ENCODE measurements at regions of chr9 and their contacts with region 1.

Region 1: DNA sequence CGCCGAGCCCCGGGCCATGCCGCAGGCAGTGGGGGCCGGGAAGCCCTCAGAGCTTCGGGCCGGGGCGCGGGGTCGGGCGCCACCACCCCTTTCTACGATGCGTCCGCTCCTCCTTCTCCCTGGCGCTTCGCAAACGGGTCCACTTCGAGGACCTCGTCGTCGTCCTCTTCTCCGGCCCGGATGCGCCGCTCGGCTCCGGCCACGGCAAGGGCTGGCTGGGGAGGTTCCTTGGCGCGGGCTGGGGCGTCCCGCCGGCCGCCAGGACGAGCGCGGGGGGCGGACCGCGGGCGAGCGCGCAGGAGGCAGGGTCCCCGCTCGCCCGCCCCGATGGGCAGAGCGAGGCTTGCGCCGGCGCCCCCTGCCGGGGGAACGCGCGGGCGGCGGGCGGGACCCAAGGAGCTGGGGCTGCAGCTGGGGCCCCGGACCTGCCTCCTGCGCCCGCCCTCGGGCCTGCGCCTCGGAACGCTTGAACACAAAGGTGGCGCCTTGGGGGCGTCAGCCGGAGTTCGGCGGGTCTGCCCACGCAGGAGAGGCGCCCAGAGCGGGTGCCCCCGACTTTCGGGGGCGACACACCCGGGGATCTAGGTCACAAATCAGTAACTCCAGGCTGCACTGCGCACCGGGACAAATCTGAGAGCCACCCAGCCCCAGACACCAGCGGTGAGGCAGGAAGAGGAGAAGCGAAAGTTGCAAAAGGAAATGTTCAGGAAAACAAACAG is at the start of gene ROR2:
- DNase-seq: peak in 1 of 2 experiments; percentile 94
- H3K4me3 ChIP-seq: peak within 1 kb of the TSS; percentile 48 to 78 (median 72)
- H3K27ac ChIP-seq: no peak within 1 kb of the TSS
- H3K4me1 ChIP-seq: peaks cover 2 to 9% (median 2%) of the 10 kb centered on the region in 4 experiments
- H3K27me3 ChIP-seq: peaks cover 7 to 66% (median 51%) of the 10 kb centered on the region in 4 experiments
- CTCF ChIP-seq: peak; percentile 67 to 84 (median 68)
- EP300 ChIP-seq: no peak
- POLR2A ChIP-seq: no peak
- RAD21 ChIP-seq: peak; percentile 33 to 77
- total RNA-seq, gene ROR2: 4.0 and 4.3 TPM in 2 replicates

Region 2: GRCh38 chr9:91546574-91546973 is 403.5 kb before region 1 on chr9:
- CTCF ChIA-PET with region 1: no interaction called
- POLR2A ChIA-PET with region 1: no interaction called
- DNase-seq: no peak
- H3K4me3 ChIP-seq: no peak overlapping the region
- H3K27ac ChIP-seq: no peak overlapping the region
- H3K4me1 ChIP-seq: no peaks in the 10 kb centered on the region
- H3K27me3 ChIP-seq: no peaks in the 10 kb centered on the region
- CTCF ChIP-seq: no peak
- EP300 ChIP-seq: no peak
- POLR2A ChIP-seq: no peak
- RAD21 ChIP-seq: no peak

Region 3: DNA sequence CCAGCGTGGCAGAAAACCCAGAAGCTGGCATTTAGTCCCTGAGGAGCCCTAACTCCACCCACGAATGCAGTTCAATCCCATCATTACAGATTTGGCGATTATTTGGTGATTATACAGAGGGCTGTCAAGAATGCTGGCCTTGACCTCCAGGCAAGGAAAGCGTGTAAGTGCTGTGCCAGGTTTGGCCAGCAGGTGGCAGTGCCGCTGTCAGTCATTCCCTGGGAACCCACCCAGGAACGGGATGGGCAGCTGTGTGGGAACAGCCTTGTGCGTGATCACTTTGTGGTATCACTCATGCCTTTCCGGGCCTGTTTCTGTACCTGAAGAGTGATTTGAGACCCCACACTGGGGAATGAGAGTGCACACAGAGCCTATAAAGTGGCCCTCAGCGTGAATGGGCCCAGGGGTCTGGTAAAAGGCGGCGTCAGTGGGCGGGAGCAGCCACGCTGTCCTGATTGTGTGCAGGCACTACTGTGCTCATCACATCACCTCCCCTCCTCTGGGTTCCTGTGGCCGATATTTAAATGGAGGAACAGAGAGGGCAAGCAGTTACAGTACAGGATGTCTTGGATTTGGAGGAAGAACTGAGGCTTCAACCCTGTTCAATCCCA is 215.6 kb before region 1 on chr9:
- CTCF ChIA-PET with region 1: interaction called, 10 read pairs
- POLR2A ChIA-PET with region 1: no interaction called
- DNase-seq: peak; percentile 23 to 96
- H3K4me3 ChIP-seq: no peak overlapping the region
- H3K27ac ChIP-seq: no peak overlapping the region
- H3K4me1 ChIP-seq: no peaks in the 10 kb centered on the region; a peak in 1 of 7 replicates
- H3K27me3 ChIP-seq: no peaks in the 10 kb centered on the region
- CTCF ChIP-seq: peak; percentile 81 to 99 (median 99)
- EP300 ChIP-seq: no peak
- POLR2A ChIP-seq: no peak
- RAD21 ChIP-seq: peak; percentile 65 to 73

Region 4: GRCh38 chr9:91884696-91885687 is 65.1 kb before region 1 on chr9:
- CTCF ChIA-PET with region 1: interaction called, 13 read pairs
- POLR2A ChIA-PET with region 1: interaction called, 3 read pairs
- DNase-seq: peak in 1 of 2 experiments; percentile 56
- H3K4me3 ChIP-seq: peak overlapping the region in 1 of 4 experiments; percentile 11; a peak in 3 of 8 replicates
- H3K27ac ChIP-seq: no peak overlapping the region
- H3K4me1 ChIP-seq: peaks cover 4 to 20% (median 13%) of the 10 kb centered on the region in 4 experiments
- H3K27me3 ChIP-seq: peaks cover 26 to 45% (median 34%) of the 10 kb centered on the region in 4 experiments
- CTCF ChIP-seq: no peak
- EP300 ChIP-seq: no peak
- POLR2A ChIP-seq: no peak
- RAD21 ChIP-seq: no peak

Region 5: GRCh38 chr9:91966503-91966902 is 16.4 kb after region 1 on chr9:
- CTCF ChIA-PET with region 1: interaction called, 32 read pairs
- POLR2A ChIA-PET with region 1: no interaction called
- DNase-seq: no peak
- H3K4me3 ChIP-seq: no peak overlapping the region
- H3K27ac ChIP-seq: no peak overlapping the region
- H3K4me1 ChIP-seq: no peaks in the 10 kb centered on the region
- H3K27me3 ChIP-seq: no peaks in the 10 kb centered on the region
- CTCF ChIP-seq: no peak
- EP300 ChIP-seq: no peak
- POLR2A ChIP-seq: no peak
- RAD21 ChIP-seq: no peak

Region 6: DNA sequence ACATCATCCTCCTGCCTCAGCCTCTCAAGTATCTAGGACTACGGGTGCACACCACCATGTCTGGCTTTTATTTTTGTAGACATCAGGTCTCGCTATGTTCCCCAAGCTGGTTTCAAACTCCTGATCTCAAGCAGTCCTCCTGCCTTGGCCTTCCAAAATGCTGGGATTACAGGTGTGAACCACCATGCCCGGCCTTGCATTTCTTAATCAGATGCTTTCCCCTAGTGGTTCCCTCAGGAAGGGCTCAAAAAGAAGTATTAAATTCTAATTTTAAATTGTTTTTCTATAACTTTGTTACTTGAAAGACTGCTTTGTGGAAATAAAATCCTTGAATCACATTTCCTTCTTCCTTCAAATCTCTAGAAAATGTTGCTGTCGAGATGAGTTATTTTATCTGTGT is 79.4 kb after region 1 on chr9:
- CTCF ChIA-PET with region 1: interaction called, 11 read pairs
- POLR2A ChIA-PET with region 1: no interaction called
- DNase-seq: no peak
- H3K4me3 ChIP-seq: no peak overlapping the region
- H3K27ac ChIP-seq: no peak overlapping the region
- H3K4me1 ChIP-seq: peaks cover 0 to 3% (median 0%) of the 10 kb centered on the region in 4 experiments; a peak in 1 of 7 replicates
- H3K27me3 ChIP-seq: no peaks in the 10 kb centered on the region
- CTCF ChIP-seq: peak in 2 of 3 experiments; percentile 40 to 42; a peak in 3 of 4 replicates
- EP300 ChIP-seq: no peak
- POLR2A ChIP-seq: no peak
- RAD21 ChIP-seq: peak; percentile 51 to 58

Region 7: DNA sequence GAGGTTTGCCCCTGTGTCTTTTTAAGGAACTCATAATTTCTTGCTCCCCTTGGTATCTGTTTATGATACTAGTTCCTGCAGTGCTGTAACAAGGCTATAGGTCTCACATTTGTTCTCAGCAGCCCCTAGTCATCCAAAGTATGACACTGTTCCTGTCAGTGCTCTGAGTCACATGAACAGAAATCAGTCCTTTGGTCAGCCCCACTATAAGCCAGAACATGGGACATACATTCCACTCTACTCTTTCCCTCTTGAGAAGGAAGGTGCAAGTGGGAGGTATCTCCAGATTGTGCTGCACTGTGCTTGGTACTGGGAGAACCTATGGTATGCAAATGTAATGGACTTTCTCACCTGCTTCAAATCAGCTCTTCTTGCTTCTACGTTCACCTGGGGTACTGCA is 256.4 kb after region 1 on chr9:
- CTCF ChIA-PET with region 1: no interaction called
- POLR2A ChIA-PET with region 1: no interaction called
- DNase-seq: no peak
- H3K4me3 ChIP-seq: no peak overlapping the region
- H3K27ac ChIP-seq: no peak overlapping the region
- H3K4me1 ChIP-seq: no peaks in the 10 kb centered on the region
- H3K27me3 ChIP-seq: no peaks in the 10 kb centered on the region
- CTCF ChIP-seq: no peak
- EP300 ChIP-seq: no peak
- POLR2A ChIP-seq: no peak
- RAD21 ChIP-seq: no peak

Measured in H1 (cell line).